GM10248 (cell line): ENCODE measurements at regions of chr12 and their contacts with region 1.

Region 1: DNA sequence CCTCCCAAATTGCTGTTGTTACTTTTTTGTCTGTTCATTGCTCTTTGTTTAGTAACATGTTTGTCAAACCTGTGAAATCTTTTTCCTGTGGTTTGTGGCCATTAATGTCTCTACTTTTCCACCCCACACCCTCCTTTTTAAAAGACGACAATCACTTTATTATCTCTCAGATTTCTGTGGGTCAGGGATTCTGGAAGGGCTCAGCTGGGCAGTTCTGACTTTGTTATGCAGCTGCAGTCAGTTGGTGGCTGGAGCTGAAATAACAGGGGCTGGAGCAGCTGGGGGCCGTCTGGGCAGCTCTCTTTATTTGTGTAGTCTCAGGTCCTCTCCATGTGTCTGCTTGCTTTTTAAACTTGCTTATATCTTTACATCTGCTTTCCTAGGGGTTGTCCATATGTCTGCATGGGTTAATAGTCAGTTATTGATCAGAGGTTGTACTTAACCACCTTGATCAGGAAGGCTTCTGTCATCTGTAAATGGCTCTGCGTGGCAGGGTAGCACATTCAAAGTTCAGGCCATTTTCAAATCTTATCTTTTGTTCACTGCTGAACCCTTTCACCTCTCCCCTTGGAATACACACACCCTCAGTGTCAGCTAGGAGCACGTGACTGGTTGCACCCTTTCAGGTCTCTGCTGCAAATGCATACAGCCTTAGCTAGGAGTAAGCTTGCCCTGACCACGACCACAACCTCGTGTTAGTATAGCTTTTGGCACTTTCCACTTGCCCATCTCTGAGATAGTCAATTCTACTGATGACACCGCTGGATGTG is 27.9 kb downstream of the BORCS5 start:
- DNase-seq: no peak
- CTCF ChIP-seq: no peak

Region 2: DNA sequence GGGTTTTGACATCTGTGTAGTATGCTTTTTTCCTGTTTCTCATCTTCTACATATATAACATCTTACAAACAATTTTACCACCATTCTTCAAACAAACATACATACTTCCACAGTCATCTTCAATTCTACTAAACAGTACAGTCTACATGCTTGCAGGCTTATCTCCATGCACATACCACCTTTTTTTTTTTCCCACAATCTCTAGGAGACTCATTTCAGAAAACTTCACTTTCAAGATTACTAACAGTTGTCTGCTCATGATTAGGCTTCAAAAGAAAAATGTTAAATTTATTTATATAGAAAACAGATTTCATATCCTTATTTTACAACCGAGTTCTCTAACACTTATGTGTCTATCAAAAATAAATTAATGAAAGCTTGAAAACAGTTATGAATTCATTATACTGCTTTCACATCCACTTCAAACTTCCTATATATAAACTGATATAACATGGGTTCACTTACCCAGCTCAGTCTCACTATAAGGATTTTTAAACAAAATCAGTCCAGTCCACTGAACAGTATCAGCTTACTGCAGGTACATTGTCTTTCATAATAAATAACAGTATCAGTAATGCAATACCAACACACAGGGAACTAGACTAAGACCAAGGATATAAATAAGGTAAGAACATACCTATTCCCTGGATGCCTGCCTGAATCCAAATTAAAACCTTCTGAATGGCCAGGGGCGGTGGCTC is 160.4 kb before region 1 on chr12:
- CTCF ChIA-PET with region 1: no interaction called
- POLR2A ChIA-PET with region 1: no interaction called
- DNase-seq: no peak
- CTCF ChIP-seq: no peak

Region 3: DNA sequence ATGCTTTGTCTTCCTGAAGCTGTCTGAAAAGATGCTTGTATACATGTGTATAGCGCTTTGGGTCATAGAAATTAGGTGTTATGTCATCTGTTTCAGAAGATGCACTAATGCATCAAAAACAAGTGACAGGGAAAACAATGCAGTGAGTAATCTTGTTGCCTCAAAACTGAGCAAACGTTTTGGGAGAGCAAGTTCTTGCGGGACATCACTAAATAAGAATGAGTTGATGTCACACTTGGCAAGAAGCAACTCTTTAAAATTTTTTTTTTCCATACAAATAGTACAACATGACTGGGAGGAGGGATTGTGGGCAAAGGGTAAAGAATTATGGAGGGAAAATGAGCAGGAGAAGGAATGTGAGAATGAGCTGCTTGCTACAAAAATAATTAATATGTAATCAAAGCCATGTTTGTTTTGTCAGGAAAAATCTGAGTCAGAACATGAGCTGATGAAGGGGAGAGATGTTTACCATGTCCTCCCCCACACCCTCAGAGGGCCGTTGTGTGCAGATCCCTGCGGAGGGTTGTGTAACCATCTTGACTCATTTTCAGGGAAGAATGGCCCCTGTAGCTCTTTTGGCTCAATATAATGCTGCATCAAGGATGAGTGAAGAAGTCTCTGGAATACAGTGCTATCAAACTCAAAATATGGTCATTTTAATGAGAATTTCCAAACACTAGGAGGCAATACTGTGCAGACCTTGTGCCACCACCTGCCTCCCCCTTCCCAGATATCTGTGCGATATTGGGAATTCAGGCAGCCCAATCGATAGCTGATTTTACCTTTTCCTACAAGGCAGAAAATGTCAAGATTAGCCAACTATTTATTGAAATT is 13.5 kb after region 1 on chr12:
- CTCF ChIA-PET with region 1: interaction called, 26 read pairs
- POLR2A ChIA-PET with region 1: no interaction called
- DNase-seq: no peak
- CTCF ChIP-seq: no peak

Region 4: DNA sequence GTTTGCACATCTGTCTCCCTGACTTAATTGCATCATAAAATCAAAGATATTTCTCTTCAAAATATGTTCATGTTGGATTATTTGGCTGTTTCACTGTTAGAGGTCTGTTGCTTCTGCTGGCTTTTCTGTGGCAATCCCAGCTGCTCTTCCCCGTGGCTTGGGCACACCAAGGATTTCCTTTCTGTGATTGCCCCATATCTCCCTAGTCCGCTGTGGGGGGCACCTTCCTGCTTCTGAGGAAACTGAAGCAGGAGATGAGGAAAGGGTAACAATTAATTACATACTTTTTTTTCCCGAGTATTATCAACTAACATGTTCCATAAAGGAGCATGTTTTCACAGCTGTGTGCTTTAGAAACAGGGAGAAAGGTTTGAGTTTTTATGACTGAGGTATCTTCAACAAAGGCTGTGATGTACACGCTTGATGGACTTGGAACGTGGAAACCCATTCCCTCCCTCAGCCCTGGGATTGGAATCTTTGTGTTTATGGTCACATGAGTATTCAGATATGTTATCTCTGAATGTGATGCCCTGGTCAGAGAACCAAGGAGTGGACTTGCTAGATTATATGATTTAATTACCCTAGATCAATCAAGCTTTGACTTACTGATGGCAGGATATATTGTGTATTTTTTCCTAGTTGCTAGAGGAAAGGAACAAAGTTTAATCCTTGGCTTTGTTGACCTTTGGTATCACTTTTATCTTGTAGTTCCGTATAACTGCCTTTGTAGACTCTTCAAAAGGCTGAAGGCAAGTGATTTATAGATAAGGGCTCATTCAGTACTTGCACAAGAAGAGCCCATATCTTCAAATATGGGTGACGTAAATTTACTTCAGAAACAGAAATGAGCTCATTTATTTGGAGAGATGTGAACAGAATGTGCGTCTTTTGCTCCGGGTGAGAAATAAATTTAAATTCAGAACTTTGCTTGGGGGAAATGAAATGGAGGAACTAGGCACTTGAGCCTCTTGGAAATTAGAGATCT is 18.8 kb after region 1 on chr12:
- CTCF ChIA-PET with region 1: interaction called, 26 read pairs
- POLR2A ChIA-PET with region 1: no interaction called
- DNase-seq: no peak
- CTCF ChIP-seq: no peak